Left lung (tissue), 14 donors: ENCODE measurements at regions of chr13 and their contacts with region 1.

Region 1: DNA sequence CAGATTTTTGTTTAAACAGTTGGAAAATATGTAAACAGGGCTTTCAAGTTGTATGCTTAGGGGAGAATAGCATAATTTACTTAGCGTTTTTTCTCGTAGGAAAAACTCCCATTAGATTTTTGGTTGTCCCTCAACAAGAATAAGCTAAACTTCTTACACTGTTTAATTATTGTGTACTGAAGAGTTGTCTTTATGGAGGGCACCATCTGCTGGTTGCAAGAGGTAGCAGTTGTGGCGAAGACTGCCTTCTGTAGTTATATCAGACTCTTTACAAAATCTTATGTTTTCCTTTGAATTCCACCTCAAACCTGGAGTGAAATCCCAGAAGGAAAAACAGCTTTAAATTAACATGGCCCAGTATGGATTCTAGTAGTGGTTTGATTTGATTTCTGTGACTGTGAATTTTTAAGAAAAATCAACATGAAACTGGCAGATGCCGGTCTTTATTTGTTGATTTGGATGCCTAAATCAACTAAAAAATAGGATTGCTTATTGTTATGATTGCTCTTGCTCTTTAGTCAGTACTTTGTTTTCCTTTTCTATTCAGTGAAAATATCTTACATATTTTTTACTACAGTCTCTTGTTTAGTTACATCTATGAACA is 53.4 kb downstream of the PDS5B start:
- DNase-seq: peak in 2 of 4 donors; percentile 33 to 68
- ATAC-seq: peak; percentile 98
- H3K4me3 ChIP-seq: no peak overlapping the region
- H3K27ac ChIP-seq: no peak overlapping the region
- H3K4me1 ChIP-seq: peaks cover 0 to 35% of the 10 kb centered on the region in 2 donors
- H3K27me3 ChIP-seq: no peaks in the 10 kb centered on the region
- CTCF ChIP-seq: peak; percentile 72 to 81

Region 2: GRCh38 chr13:32586080-32586900 is 53.3 kb before region 1 on chr13 and contains the start of gene PDS5B:
- intact Hi-C with region 1: loop called in 1 of 2 experiments (anchors 5 kb)
- DNase-seq: peak; percentile 94 to 99 (median 96)
- ATAC-seq: peak; percentile 98
- H3K4me3 ChIP-seq: peak within 1 kb of the TSS; percentile 53 to 70
- H3K27ac ChIP-seq: peak within 1 kb of the TSS; percentile 94 to 98
- H3K4me1 ChIP-seq: peaks cover 10 to 40% of the 10 kb centered on the region in 2 donors
- H3K27me3 ChIP-seq: no peaks in the 10 kb centered on the region
- CTCF ChIP-seq: peak; percentile 95 to 98
- polyA plus RNA-seq, gene PDS5B: 62.6 to 75.8 (median 71.5) TPM

Region 3: GRCh38 chr13:33571618-33572017 is 932.0 kb after region 1 on chr13:
- intact Hi-C with region 1: no loop called
- DNase-seq: no peak
- ATAC-seq: no peak
- H3K4me3 ChIP-seq: no peak overlapping the region
- H3K27ac ChIP-seq: no peak overlapping the region
- H3K4me1 ChIP-seq: no peaks in the 10 kb centered on the region
- H3K27me3 ChIP-seq: no peaks in the 10 kb centered on the region
- CTCF ChIP-seq: no peak